ENCODE measurements at regions of chr17 and their contacts with region 1.

Region 1: DNA sequence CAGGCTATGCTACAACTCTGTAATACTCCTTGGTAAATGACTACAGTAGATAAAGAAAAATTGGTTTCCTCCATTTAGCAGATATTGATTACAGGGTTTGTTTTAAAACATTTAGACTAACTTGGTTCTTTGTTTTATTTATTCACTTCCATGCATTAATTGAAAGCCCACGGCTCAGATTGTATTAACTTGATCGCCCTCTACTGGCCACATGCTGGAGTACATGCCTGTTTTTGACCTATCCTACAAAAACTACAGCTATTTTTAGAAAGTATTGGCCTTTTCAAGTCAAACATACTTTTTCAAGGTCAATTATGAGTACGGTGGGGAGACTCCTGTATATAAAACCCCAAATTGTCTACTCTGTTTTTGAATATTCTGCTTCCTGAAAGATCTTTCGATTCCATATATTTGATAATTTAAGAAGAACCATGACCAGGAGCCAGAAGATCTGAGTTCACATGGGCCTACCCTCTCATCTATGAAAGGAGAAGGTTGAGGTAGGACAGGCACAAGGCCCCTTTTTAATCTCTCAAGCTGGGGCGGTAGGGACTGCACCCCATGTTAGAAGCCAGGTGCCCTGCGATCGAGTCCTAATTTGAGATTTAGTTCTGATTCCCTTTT is 51.8 kb downstream of the CA10 start:
- DNase-seq: peak in 1 of 5 donors; percentile 18
- ATAC-seq: no peak
- H3K4me3 ChIP-seq: no peak overlapping the region
- H3K27ac ChIP-seq: no peak overlapping the region
- H3K4me1 ChIP-seq: no peaks in the 10 kb centered on the region
- H3K27me3 ChIP-seq: peaks cover 0 to 24% (median 0%) of the 10 kb centered on the region in 9 donors
- CTCF ChIP-seq: peak; percentile 54 to 79 (median 72)
- POLR2A ChIP-seq: no peak

Region 2: GRCh38 chr17:51298508-51299371 is 808.0 kb before region 1 on chr17:
- intact Hi-C with region 1: loop called in 3 of 10 experiments (anchors 5 to 10 kb)
- DNase-seq: no peak
- ATAC-seq: no peak
- H3K4me3 ChIP-seq: no peak overlapping the region
- H3K27ac ChIP-seq: no peak overlapping the region
- H3K4me1 ChIP-seq: no peaks in the 10 kb centered on the region
- H3K27me3 ChIP-seq: no peaks in the 10 kb centered on the region
- CTCF ChIP-seq: peak; percentile 28 to 69 (median 56)
- POLR2A ChIP-seq: no peak

Region 3: GRCh38 chr17:51305182-51305581 is 801.6 kb before region 1 on chr17:
- intact Hi-C with region 1: loop called in 1 of 10 experiments (anchors 10 kb)
- DNase-seq: no peak
- ATAC-seq: no peak
- H3K4me3 ChIP-seq: no peak overlapping the region
- H3K27ac ChIP-seq: no peak overlapping the region
- H3K4me1 ChIP-seq: no peaks in the 10 kb centered on the region
- H3K27me3 ChIP-seq: no peaks in the 10 kb centered on the region
- CTCF ChIP-seq: no peak
- POLR2A ChIP-seq: no peak

Region 4: GRCh38 chr17:51371732-51372151 is 735.0 kb before region 1 on chr17:
- intact Hi-C with region 1: loop called in 3 of 10 experiments (anchors 5 to 10 kb)
- DNase-seq: no peak
- ATAC-seq: peak in 3 of 4 donors; percentile 72 to 83 (median 77)
- H3K4me3 ChIP-seq: no peak overlapping the region
- H3K27ac ChIP-seq: no peak overlapping the region
- H3K4me1 ChIP-seq: peaks cover 0 to 12% (median 0%) of the 10 kb centered on the region in 12 donors
- H3K27me3 ChIP-seq: peaks cover 0 to 11% (median 3%) of the 10 kb centered on the region in 9 donors
- CTCF ChIP-seq: peak; percentile 9 to 61 (median 40)
- POLR2A ChIP-seq: no peak

Region 5: DNA sequence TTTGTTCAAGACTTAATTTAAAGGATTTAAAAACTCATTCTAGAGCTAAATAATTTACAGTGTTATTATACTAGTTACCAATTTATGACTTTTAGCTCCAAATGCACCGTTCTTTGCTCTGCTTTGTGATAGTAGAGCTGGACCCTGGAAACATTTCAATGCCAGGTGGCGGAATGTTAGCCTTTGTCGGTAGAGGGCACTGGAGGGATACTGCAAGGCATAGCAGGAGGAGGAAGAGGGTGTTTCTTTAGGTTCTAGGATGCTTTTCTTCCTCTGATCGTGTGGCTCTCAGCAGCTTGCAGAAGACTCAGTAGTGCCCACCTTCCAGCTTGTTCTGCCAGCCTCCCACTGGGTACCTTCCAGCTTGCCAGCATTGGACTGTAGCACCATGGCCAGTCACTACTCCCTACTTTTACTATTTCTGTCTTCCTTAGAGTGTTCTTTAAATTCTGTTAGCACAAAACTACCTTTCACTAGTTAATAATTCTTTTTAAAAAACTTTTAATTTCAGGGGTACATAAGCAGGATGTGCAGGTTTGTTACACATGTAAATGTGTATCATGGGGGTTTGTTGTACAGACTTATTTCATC is 521.1 kb before region 1 on chr17:
- intact Hi-C with region 1: loop called in 2 of 10 experiments (anchors 5 kb)
- DNase-seq: no peak
- ATAC-seq: peak in 1 of 4 donors; percentile 13
- H3K4me3 ChIP-seq: no peak overlapping the region
- H3K27ac ChIP-seq: no peak overlapping the region
- H3K4me1 ChIP-seq: no peaks in the 10 kb centered on the region
- H3K27me3 ChIP-seq: peaks cover 0 to 12% (median 0%) of the 10 kb centered on the region in 9 donors
- CTCF ChIP-seq: peak; percentile 22 to 61 (median 42)
- POLR2A ChIP-seq: no peak

Region 6: GRCh38 chr17:51764387-51764972 is 342.3 kb before region 1 on chr17:
- intact Hi-C with region 1: loop called (anchors 1 to 10 kb)
- DNase-seq: peak in 3 of 5 donors; percentile 18 to 35 (median 22)
- ATAC-seq: peak in 3 of 4 donors; percentile 70 to 90 (median 72)
- H3K4me3 ChIP-seq: no peak overlapping the region
- H3K27ac ChIP-seq: no peak overlapping the region
- H3K4me1 ChIP-seq: no peaks in the 10 kb centered on the region
- H3K27me3 ChIP-seq: peaks cover 0 to 31% (median 3%) of the 10 kb centered on the region in 9 donors
- CTCF ChIP-seq: peak; percentile 66 to 87 (median 78)
- POLR2A ChIP-seq: no peak

Region 7: GRCh38 chr17:52237151-52237550 is 130.4 kb after region 1 on chr17:
- intact Hi-C with region 1: no loop called
- DNase-seq: no peak
- ATAC-seq: no peak
- H3K4me3 ChIP-seq: no peak overlapping the region
- H3K27ac ChIP-seq: no peak overlapping the region
- H3K4me1 ChIP-seq: no peaks in the 10 kb centered on the region
- H3K27me3 ChIP-seq: no peaks in the 10 kb centered on the region
- CTCF ChIP-seq: no peak
- POLR2A ChIP-seq: no peak